Activated CD4-positive, alpha-beta memory T cell treated with anti-CD3 and anti-CD28 coated beads for 36 hours (primary cell): ENCODE measurements at regions of chr12 and their contacts with region 1.

Region 1: GRCh38 chr12:47949441-47950308 is 13.7 kb upstream of the TMEM106C start:
- DNase-seq: peak; percentile 72
- H3K4me3 Mint-ChIP-seq: no peak overlapping the region
- H3K27ac Mint-ChIP-seq: no peak overlapping the region
- H3K4me1 Mint-ChIP-seq: peaks cover 5% of the 10 kb centered on the region
- H3K27me3 Mint-ChIP-seq: peaks cover 3% of the 10 kb centered on the region

Region 2: GRCh38 chr12:47194501-47194900 is 755.2 kb before region 1 on chr12:
- CTCF ChIA-PET with region 1: no interaction called
- POLR2A ChIA-PET with region 1: no interaction called
- intact Hi-C with region 1: no loop called
- DNase-seq: no peak
- H3K4me3 Mint-ChIP-seq: no peak overlapping the region
- H3K27ac Mint-ChIP-seq: peak overlapping the region; percentile 80
- H3K4me1 Mint-ChIP-seq: peaks cover 75% of the 10 kb centered on the region
- H3K27me3 Mint-ChIP-seq: no peaks in the 10 kb centered on the region

Region 3: GRCh38 chr12:47844274-47845019 is 105.2 kb before region 1 on chr12:
- CTCF ChIA-PET with region 1: interaction called, 13 read pairs
- POLR2A ChIA-PET with region 1: no interaction called
- intact Hi-C with region 1: no loop called
- DNase-seq: no peak
- H3K4me3 Mint-ChIP-seq: no peak overlapping the region
- H3K27ac Mint-ChIP-seq: no peak overlapping the region
- H3K4me1 Mint-ChIP-seq: peaks cover 7% of the 10 kb centered on the region
- H3K27me3 Mint-ChIP-seq: no peaks in the 10 kb centered on the region

Region 4: DNA sequence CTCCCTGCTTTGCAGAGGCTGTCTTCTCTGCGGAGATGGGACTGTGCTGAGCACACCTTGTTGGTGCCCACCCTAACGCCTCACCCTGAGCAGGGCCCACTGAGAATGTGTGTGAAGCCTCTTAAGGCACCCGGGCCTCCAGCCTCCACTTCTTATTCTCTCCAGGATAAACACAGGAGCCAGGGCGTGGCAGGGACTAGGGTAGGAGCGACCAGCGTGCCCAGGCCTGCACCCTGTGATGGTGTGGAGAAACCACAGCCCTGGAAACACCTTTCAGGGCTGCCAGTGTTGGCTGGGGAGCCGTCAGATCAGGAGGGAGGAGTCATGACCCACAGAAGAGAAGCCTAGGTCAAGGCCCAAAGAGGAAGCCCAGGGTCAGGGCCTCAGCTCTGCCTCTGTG is 86.2 kb before region 1 on chr12:
- CTCF ChIA-PET with region 1: interaction called, 10 read pairs
- POLR2A ChIA-PET with region 1: interaction called, 4 read pairs
- intact Hi-C with region 1: no loop called
- DNase-seq: no peak
- H3K4me3 Mint-ChIP-seq: no peak overlapping the region
- H3K27ac Mint-ChIP-seq: peak overlapping the region; percentile 54
- H3K4me1 Mint-ChIP-seq: peaks cover 86% of the 10 kb centered on the region
- H3K27me3 Mint-ChIP-seq: no peaks in the 10 kb centered on the region

Region 5: GRCh38 chr12:47916546-47916945 is 33.1 kb before region 1 on chr12:
- CTCF ChIA-PET with region 1: interaction called, 10 read pairs
- POLR2A ChIA-PET with region 1: no interaction called
- intact Hi-C with region 1: no loop called
- DNase-seq: no peak
- H3K4me3 Mint-ChIP-seq: no peak overlapping the region
- H3K27ac Mint-ChIP-seq: no peak overlapping the region
- H3K4me1 Mint-ChIP-seq: no peaks in the 10 kb centered on the region
- H3K27me3 Mint-ChIP-seq: peaks cover 9% of the 10 kb centered on the region

Region 6: DNA sequence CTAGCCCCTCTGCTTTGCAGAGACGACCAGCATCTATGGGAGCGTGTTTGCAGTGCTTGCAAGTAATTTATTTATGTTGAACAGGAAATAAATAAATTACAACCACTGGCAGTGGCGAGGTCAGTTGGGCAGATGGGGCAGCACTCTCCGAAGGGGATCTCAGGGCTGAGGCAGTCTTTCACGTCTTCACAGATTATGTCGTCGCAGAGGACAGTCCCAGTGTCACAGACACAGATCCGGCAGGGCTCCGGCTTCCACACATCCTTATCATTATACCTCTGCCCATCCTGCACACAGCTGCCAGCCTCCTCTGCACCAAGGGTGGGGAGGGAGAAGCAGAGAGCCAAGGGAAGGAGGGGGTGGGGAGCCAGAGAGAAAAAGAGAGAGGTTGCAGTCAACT is 50.1 kb after region 1 on chr12:
- CTCF ChIA-PET with region 1: no interaction called
- POLR2A ChIA-PET with region 1: no interaction called
- intact Hi-C with region 1: no loop called
- DNase-seq: no peak
- H3K4me3 Mint-ChIP-seq: no peak overlapping the region
- H3K27ac Mint-ChIP-seq: no peak overlapping the region
- H3K4me1 Mint-ChIP-seq: peaks cover 34% of the 10 kb centered on the region
- H3K27me3 Mint-ChIP-seq: peaks cover 69% of the 10 kb centered on the region